ENCODE measurements at regions of chr12 and their contacts with region 1.

Region 1: GRCh38 chr12:11749943-11750690 is 100.6 kb downstream of the ETV6 start:
- DNase-seq: no peak
- ATAC-seq: peak; percentile 39 to 51

Region 2: DNA sequence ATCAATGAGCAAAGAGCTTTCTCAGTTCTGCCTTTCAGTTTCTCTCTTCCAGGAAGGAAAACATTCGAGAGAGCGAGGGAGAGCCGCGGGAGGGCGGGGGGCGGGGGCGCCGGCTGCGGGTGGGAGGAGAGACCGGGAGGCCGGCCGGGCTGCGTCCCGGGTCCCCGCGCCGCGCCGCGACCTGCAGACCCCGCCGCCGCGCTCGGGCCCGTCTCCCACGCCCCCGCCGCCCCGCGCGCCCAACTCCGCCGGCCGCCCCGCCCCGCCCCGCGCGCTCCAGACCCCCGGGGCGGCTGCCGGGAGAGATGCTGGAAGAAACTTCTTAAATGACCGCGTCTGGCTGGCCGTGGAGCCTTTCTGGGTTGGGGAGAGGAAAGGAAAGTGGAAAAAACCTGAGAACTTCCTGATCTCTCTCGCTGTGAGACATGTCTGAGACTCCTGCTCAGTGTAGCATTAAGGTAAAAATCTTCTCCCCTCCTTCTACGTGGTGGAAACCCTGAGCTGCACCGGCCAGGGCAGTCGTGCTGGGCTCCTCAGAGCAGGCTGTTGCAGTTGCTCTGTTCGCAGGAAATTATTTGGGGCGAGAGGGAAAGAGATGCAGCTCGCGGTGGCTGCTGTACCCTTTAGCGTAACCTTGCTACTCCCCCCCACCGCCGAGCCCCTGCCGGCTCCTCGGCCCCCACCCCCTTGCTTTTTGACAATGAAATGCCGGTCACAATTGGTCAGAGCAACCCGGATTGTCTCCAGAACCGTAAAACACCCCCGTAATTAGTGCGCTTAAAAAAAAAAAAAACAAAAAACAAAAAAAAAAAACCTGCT is 100.2 kb before region 1 on chr12:
- intact Hi-C with region 1: loop called in 1 of 2 experiments (anchors 5 kb)
- DNase-seq: peak; percentile 51
- ATAC-seq: peak; percentile 15 to 29